ENCODE measurements at regions of chr2 and their contacts with region 1.

Region 1: GRCh38 chr2:48356701-48357325 is 173.1 kb upstream of the STON1 start:
- DNase-seq: no peak
- H3K4me3 Mint-ChIP-seq: no peak overlapping the region
- H3K27ac Mint-ChIP-seq: no peak overlapping the region
- H3K4me1 Mint-ChIP-seq: peaks cover 24% of the 10 kb centered on the region
- H3K27me3 Mint-ChIP-seq: no peaks in the 10 kb centered on the region
- CTCF ChIP-seq: no peak

Region 2: GRCh38 chr2:47906157-47907038 is 450.4 kb before region 1 on chr2 and contains the start of gene FBXO11:
- CTCF ChIA-PET with region 1: no interaction called
- intact Hi-C with region 1: loop called (anchors 10 kb)
- DNase-seq: peak; percentile 95
- H3K4me3 Mint-ChIP-seq: peak within 1 kb of the TSS; percentile 96
- H3K27ac Mint-ChIP-seq: peak within 1 kb of the TSS; percentile 99
- H3K4me1 Mint-ChIP-seq: peaks cover 8% of the 10 kb centered on the region
- H3K27me3 Mint-ChIP-seq: no peaks in the 10 kb centered on the region
- CTCF ChIP-seq: no peak
- total RNA-seq, gene FBXO11: 58.0 and 65.3 TPM in 2 replicates

Region 3: GRCh38 chr2:48343571-48344440 is 13.0 kb before region 1 on chr2:
- CTCF ChIA-PET with region 1: interaction called, 3 read pairs
- intact Hi-C with region 1: loop called (anchors 1 kb)
- DNase-seq: no peak
- H3K4me3 Mint-ChIP-seq: peak overlapping the region; percentile 66
- H3K27ac Mint-ChIP-seq: peak overlapping the region; percentile 78
- H3K4me1 Mint-ChIP-seq: peaks cover 21% of the 10 kb centered on the region
- H3K27me3 Mint-ChIP-seq: no peaks in the 10 kb centered on the region
- CTCF ChIP-seq: no peak